ENCODE measurements at regions of chr1 and their contacts with region 1.

Region 1: GRCh38 chr1:154335025-154335714 is 9.8 kb downstream of the ATP8B2 start:
- DNase-seq: peak; percentile 82 to 96 (median 90)
- ATAC-seq: peak; percentile 95
- H3K4me3 ChIP-seq: no peak overlapping the region
- H3K4me3 Mint-ChIP-seq: peak overlapping the region; percentile 77
- H3K27ac ChIP-seq: peak overlapping the region; percentile 42 to 64
- H3K27ac Mint-ChIP-seq: peak overlapping the region; percentile 75
- H3K4me1 ChIP-seq: peaks cover 93% of the 10 kb centered on the region
- H3K4me1 Mint-ChIP-seq: peaks cover 79% of the 10 kb centered on the region
- H3K27me3 ChIP-seq: no peaks in the 10 kb centered on the region
- H3K27me3 Mint-ChIP-seq: no peaks in the 10 kb centered on the region
- CTCF ChIP-seq: peak; percentile 96

Region 2: DNA sequence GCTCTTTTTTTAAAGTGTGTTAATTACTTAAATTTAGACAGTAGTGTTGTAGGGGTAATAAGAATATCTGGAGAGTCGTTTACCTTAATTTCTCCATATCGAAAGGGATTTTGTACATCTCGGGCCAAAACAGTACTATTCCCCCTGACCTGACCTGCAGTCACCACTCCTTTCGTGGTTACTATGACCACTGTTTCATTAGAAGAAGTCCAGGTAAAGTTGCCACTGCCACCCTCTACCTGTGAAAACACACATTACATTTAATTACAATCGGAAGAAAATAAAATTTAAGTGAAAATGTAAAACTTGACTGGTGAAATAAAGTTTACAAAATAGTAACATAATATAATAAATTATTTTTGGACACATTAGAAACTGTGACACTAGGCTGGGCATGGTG is 217.5 kb before region 1 on chr1:
- CTCF ChIA-PET with region 1: no interaction called
- POLR2A ChIA-PET with region 1: no interaction called
- intact Hi-C with region 1: no loop called
- DNase-seq: no peak
- ATAC-seq: no peak
- H3K4me3 ChIP-seq: no peak overlapping the region
- H3K4me3 Mint-ChIP-seq: no peak overlapping the region
- H3K27ac ChIP-seq: no peak overlapping the region
- H3K27ac Mint-ChIP-seq: no peak overlapping the region
- H3K4me1 ChIP-seq: peaks cover 6% of the 10 kb centered on the region
- H3K4me1 Mint-ChIP-seq: peaks cover 10% of the 10 kb centered on the region
- H3K27me3 ChIP-seq: no peaks in the 10 kb centered on the region
- H3K27me3 Mint-ChIP-seq: no peaks in the 10 kb centered on the region
- CTCF ChIP-seq: no peak

Region 3: DNA sequence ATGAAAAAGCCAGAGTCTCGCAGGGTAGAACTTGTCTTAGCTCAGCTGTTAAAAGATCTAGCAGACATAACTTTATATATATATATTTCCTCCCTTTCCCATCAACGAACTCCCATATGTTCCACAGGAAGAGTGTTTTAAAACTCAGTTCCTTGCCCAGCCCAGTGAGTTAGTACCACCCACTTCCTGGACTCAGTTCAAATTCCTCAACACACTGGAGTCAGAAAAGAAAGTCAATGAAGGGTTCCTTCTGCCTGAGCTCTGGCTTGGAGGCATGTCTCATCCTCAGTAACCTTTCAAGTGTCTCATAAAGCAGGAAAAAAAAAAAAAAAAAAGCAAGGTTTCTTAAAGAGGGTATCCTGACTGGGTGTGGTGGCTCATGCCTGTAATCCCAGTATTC is 158.8 kb before region 1 on chr1:
- CTCF ChIA-PET with region 1: no interaction called
- POLR2A ChIA-PET with region 1: no interaction called
- intact Hi-C with region 1: no loop called
- DNase-seq: no peak
- ATAC-seq: no peak
- H3K4me3 ChIP-seq: no peak overlapping the region
- H3K4me3 Mint-ChIP-seq: no peak overlapping the region
- H3K27ac ChIP-seq: peak overlapping the region; percentile 44 to 50
- H3K27ac Mint-ChIP-seq: peak overlapping the region; percentile 74
- H3K4me1 ChIP-seq: peaks cover 60% of the 10 kb centered on the region
- H3K4me1 Mint-ChIP-seq: peaks cover 78% of the 10 kb centered on the region
- H3K27me3 ChIP-seq: no peaks in the 10 kb centered on the region
- H3K27me3 Mint-ChIP-seq: no peaks in the 10 kb centered on the region
- CTCF ChIP-seq: no peak

Region 4: DNA sequence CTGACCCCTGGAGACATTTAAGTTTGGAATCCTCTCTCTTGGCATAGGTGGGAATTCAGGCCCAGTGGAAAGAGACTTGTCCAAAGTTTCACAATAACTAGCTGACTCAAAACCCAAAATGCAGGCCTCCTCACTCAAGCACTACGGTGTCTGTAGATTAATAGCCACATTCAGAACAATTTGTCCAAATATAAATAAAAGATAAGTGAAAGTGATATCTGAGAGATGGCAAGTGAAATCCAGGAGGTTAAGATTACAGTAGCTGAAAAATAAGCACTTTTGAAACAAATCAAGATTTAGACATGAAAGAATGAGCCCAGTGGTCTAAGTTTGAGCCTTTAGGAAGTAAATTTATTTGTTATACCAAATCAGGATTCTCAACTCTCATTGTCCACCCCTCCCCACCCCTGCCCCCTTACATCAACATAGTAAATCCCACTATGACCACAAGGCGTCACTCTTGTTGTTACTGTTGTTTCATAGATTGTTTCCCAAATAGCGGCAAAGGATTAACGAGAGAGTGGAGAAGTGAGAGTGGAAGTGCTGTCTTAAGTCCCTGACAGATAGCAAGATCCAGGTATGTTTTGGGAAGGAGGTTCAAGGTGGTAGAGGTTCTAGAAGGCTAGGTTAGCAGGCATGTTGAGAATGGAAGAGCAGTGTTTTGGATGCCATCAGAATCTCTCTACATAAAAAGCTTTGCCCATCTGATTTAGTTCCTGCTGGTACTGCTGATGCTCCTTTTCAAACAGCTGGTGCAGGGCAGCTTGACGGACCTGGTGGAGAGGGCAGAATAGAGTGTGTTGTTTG is 136.2 kb before region 1 on chr1:
- CTCF ChIA-PET with region 1: interaction called, 13 read pairs
- POLR2A ChIA-PET with region 1: interaction called, 4 read pairs
- intact Hi-C with region 1: loop called (anchors 1 to 5 kb)
- DNase-seq: peak in 11 of 14 experiments; percentile 5 to 81 (median 30)
- ATAC-seq: peak; percentile 90
- H3K4me3 ChIP-seq: no peak overlapping the region
- H3K4me3 Mint-ChIP-seq: no peak overlapping the region
- H3K27ac ChIP-seq: no peak overlapping the region
- H3K27ac Mint-ChIP-seq: no peak overlapping the region
- H3K4me1 ChIP-seq: peaks cover 3% of the 10 kb centered on the region
- H3K4me1 Mint-ChIP-seq: no peaks in the 10 kb centered on the region
- H3K27me3 ChIP-seq: no peaks in the 10 kb centered on the region
- H3K27me3 Mint-ChIP-seq: peaks cover 3% of the 10 kb centered on the region
- CTCF ChIP-seq: peak; percentile 71

Region 5: GRCh38 chr1:154324669-154325582 is 10.2 kb before region 1 on chr1 and contains the start of gene ATP8B2:
- CTCF ChIA-PET with region 1: interaction called, 61 read pairs
- POLR2A ChIA-PET with region 1: interaction called, 94 read pairs
- intact Hi-C with region 1: loop called (anchors 1 kb)
- DNase-seq: peak; percentile 68 to 90 (median 74)
- ATAC-seq: peak; percentile 57
- H3K4me3 ChIP-seq: peak within 1 kb of the TSS; percentile 70
- H3K4me3 Mint-ChIP-seq: peak within 1 kb of the TSS; percentile 94
- H3K27ac ChIP-seq: peak within 1 kb of the TSS; percentile 80 to 86
- H3K27ac Mint-ChIP-seq: peak within 1 kb of the TSS; percentile 90
- H3K4me1 ChIP-seq: peaks cover 52% of the 10 kb centered on the region
- H3K4me1 Mint-ChIP-seq: peaks cover 36% of the 10 kb centered on the region
- H3K27me3 ChIP-seq: no peaks in the 10 kb centered on the region
- H3K27me3 Mint-ChIP-seq: no peaks in the 10 kb centered on the region
- CTCF ChIP-seq: peak; percentile 95
- total RNA-seq, gene ATP8B2: 72.7 to 80.7 TPM

Region 6: DNA sequence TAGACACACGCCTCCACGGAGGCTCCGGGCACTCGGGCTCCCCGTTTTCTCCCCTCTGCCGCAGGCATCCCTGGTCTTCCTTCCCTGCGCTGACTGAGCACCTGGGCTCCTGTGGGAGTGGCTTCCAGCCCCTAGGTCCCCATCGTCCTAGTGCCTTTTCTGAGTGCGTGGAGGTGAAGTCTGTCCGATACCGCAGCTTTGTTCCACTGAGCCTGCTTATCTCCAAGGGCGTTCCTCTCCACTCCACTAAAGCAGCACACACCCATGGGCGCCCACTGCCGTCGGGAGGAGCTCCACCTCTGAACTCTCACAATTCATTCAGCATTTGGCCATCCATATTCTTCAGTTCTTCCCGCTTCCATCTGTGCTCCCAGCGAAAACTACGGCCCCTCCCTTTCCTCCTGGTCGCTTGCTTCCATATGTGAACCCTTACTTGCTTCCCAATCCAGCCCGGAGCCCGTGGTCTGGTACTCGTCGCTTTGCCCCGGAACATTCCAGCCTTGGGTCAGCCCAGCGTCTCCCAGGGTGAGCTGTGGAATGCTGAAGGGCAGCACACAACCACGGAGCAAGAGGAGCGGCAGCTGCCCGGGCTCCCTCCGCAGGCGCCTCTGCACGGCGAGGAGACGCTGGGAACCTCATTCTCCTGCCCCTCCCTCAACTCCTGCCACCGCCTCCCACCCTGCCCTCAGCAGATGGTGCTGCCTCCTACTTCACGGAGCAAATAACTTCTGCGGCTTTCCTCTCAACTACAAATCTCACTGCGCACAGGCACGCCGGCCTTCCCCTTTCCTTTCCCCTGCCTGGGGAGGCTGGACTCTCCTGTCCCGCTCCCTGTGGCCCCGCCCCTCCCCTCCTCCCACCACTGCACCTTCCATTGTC is 17.6 kb after region 1 on chr1:
- CTCF ChIA-PET with region 1: interaction called, 15 read pairs
- POLR2A ChIA-PET with region 1: interaction called, 28 read pairs
- intact Hi-C with region 1: no loop called
- DNase-seq: peak in 11 of 14 experiments; percentile 22 to 80 (median 53)
- ATAC-seq: peak; percentile 82
- H3K4me3 ChIP-seq: peak overlapping the region; percentile 64
- H3K4me3 Mint-ChIP-seq: peak overlapping the region; percentile 92
- H3K27ac ChIP-seq: peak overlapping the region; percentile 40 to 55
- H3K27ac Mint-ChIP-seq: peak overlapping the region; percentile 75
- H3K4me1 ChIP-seq: peaks cover 45% of the 10 kb centered on the region
- H3K4me1 Mint-ChIP-seq: peaks cover 54% of the 10 kb centered on the region
- H3K27me3 ChIP-seq: no peaks in the 10 kb centered on the region
- H3K27me3 Mint-ChIP-seq: no peaks in the 10 kb centered on the region
- CTCF ChIP-seq: peak; percentile 10

Region 7: GRCh38 chr1:154749078-154749760 is 414.0 kb after region 1 on chr1:
- CTCF ChIA-PET with region 1: no interaction called
- POLR2A ChIA-PET with region 1: no interaction called
- intact Hi-C with region 1: no loop called
- DNase-seq: no peak
- ATAC-seq: no peak
- H3K4me3 ChIP-seq: no peak overlapping the region
- H3K4me3 Mint-ChIP-seq: no peak overlapping the region
- H3K27ac ChIP-seq: no peak overlapping the region
- H3K27ac Mint-ChIP-seq: no peak overlapping the region
- H3K4me1 ChIP-seq: peaks cover 46% of the 10 kb centered on the region
- H3K4me1 Mint-ChIP-seq: peaks cover 49% of the 10 kb centered on the region
- H3K27me3 ChIP-seq: no peaks in the 10 kb centered on the region
- H3K27me3 Mint-ChIP-seq: no peaks in the 10 kb centered on the region
- CTCF ChIP-seq: no peak